Ascending aorta (tissue), 2 donors: ENCODE measurements at regions of chr2 and their contacts with region 1.

Region 1: GRCh38 chr2:233251306-233252116 is at the start of gene ATG16L1:
- DNase-seq: peak; percentile 78 to 97
- H3K4me3 ChIP-seq: peak within 1 kb of the TSS; percentile 68 to 79
- H3K27ac ChIP-seq: peak within 1 kb of the TSS; percentile 71 to 88
- H3K4me1 ChIP-seq: peaks cover 3 to 14% of the 10 kb centered on the region in 2 donors
- H3K27me3 ChIP-seq: no peaks in the 10 kb centered on the region
- CTCF ChIP-seq: peak; percentile 93 to 96 (median 94)
- total RNA-seq, gene ATG16L1: 28.1 TPM

Region 2: GRCh38 chr2:232550354-232551249 is 700.9 kb before region 1 on chr2 and contains the starts of genes EIF4E2 and TIGD1:
- intact Hi-C with region 1: loop called (anchors 2 kb)
- DNase-seq: peak; percentile 67 to 97
- H3K4me3 ChIP-seq: peak within 1 kb of the TSS; percentile 84 to 100
- H3K27ac ChIP-seq: peak within 1 kb of the TSS; percentile 97 to 100
- H3K4me1 ChIP-seq: peaks cover 4 to 5% of the 10 kb centered on the region in 2 donors
- H3K27me3 ChIP-seq: no peaks in the 10 kb centered on the region
- CTCF ChIP-seq: peak; percentile 31 to 45 (median 34)
- total RNA-seq, gene EIF4E2: 16.7 TPM
- total RNA-seq, gene TIGD1: 0.53 TPM

Region 3: GRCh38 chr2:232697100-232697865 is 554.2 kb before region 1 on chr2 and contains the start of gene GIGYF2:
- intact Hi-C with region 1: loop called (anchors 1 kb)
- DNase-seq: peak; percentile 92 to 98
- H3K4me3 ChIP-seq: peak within 1 kb of the TSS; percentile 83 to 98
- H3K27ac ChIP-seq: peak within 1 kb of the TSS; percentile 93 to 96
- H3K4me1 ChIP-seq: peaks cover 7 to 22% of the 10 kb centered on the region in 2 donors
- H3K27me3 ChIP-seq: no peaks in the 10 kb centered on the region
- CTCF ChIP-seq: no peak
- total RNA-seq, gene GIGYF2: 27.5 TPM

Region 4: DNA sequence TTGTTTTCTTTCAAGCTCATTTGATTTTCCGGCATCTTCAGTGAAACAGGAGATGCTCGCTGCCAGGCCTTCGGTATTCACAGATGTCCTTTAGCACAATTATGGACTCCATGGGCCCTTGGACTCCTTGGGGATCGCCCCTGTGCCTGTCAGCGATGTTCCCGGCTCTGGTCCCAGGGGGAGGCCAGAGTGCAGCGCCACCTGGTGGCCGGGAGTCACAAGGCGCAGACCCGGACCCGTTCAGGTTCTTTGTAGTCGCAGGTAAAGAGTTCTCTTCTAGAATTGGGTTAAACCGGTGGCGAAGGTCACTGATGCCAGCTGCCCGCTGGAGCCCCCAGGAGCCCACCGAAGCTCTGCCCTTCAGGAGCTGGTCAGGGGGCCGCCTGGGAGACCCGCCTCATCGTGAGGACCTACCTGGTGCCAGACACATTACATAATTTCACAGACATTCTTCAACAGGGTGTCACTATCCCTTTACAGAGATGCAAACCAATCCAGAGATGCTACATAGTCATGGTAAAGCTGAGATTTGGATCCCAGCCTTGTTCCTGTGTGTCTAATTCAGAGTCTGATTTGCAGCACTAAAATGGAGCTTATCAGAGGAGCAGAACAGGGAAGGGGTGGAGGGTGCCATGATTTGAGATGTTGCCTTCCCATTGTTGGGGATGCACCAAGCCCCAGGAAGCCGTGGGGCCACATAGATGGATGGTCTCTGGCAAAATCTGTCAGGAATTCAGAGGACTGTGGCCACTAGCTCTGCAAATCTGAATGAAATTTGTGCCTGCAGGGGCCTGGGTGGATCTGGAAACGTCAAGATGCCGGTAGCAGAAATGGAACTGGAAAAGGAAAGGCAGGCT is 197.4 kb before region 1 on chr2:
- intact Hi-C with region 1: loop called (anchors 5 kb)
- DNase-seq: peak in 1 of 2 donors; percentile 74
- H3K4me3 ChIP-seq: no peak overlapping the region
- H3K27ac ChIP-seq: no peak overlapping the region
- H3K4me1 ChIP-seq: peaks cover 0 to 3% of the 10 kb centered on the region in 2 donors
- H3K27me3 ChIP-seq: no peaks in the 10 kb centered on the region
- CTCF ChIP-seq: peak; percentile 76 to 91 (median 86)

Region 5: DNA sequence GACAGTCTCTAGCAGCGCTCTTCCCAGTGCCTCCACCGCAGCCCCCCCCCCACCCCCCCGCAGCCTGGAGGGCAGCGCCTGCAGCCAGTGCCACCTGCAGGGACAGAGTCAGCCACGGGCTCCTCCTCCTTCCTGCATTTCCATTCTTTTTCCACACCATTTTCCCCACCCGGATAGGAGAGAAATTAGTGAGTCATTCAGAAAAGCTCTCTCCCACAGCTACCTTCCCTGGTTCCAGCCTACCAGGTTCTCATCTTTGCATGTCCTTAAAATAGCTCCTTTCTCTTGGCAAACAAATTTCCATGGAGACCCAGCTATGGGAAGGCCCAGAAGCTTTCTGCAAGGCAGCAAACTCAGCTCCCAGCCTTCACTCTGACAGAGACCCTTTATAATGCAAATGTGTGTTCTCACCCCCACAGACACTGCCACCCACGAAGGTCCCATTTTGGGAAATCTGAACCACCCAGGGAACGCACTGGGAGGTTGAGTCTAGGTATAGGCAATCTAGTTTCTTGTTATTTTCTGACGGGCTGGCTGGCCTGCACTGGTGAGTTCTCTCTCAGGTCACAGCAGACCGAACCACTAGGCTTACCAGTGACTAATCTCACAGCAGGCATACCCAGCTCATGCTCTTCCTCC is 41.9 kb before region 1 on chr2:
- intact Hi-C with region 1: no loop called
- DNase-seq: no peak
- H3K4me3 ChIP-seq: no peak overlapping the region
- H3K27ac ChIP-seq: peak overlapping the region in 1 of 2 donors; percentile 9
- H3K4me1 ChIP-seq: peaks cover 8 to 12% of the 10 kb centered on the region in 2 donors
- H3K27me3 ChIP-seq: no peaks in the 10 kb centered on the region
- CTCF ChIP-seq: no peak

Region 6: DNA sequence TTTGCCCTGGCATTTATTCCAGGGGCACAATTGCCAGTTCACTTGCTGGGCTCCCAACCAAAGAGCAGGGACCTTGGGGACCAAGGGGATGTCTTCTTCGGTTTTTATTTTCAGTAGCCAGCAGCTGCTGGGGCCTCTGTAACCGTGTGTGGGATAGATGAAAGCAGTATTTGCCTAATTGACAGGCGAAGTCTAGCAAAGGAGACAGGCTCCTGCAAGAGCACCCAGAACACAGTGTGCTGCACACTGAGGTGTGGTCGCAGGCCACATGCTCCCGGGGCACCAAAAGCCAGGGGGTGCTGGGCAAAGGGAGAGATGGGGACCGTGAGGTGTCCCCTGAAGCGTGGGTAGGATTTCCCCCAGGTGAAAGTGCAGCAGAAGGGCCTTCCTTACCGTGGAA is 61.4 kb after region 1 on chr2:
- intact Hi-C with region 1: no loop called
- DNase-seq: no peak
- H3K4me3 ChIP-seq: no peak overlapping the region
- H3K27ac ChIP-seq: no peak overlapping the region
- H3K4me1 ChIP-seq: no peaks in the 10 kb centered on the region
- H3K27me3 ChIP-seq: no peaks in the 10 kb centered on the region
- CTCF ChIP-seq: no peak

Region 7: DNA sequence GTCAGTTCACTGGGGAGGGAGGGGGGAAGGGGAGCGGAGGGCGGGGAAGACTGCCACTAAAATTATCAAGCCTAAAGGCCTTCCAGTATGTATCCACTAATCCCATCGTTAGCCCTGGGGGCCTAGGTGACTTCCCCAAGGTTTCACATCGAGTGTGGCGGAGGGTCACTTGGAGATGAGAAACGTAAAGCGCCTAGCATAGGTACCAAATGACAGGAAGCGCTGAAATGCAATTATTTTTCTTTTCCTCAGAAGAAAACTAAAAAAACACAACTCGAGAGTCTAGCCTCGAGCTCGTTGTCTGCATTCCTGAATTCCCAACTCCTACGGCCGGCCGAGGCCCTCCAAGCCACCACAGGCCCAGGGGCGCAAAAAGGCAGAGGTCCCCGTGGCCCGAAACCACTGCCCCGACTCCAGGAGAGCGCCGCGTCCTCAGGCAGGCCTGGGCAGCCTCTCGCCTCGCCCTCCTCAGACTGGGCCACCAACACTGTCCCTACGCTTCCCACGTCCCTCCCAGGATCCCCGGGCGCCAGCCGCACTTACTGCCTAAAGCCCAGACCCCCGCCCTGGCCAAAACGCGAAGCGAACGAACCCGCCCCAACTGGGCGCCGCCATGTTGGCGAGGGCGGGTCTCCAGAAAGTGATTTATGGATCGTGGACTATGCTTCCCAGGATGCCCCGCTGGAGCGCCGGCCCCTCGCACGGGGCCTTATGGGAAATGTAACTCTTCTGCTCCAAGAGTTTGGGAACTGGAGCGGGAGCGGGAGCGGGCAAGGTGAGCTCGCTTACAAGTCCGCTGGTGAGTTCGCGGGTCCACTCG is 314.8 kb after region 1 on chr2 and contains the start of gene USP40:
- intact Hi-C with region 1: loop called (anchors 2 kb)
- DNase-seq: peak; percentile 54 to 93
- H3K4me3 ChIP-seq: peak within 1 kb of the TSS; percentile 84 to 95
- H3K27ac ChIP-seq: peak within 1 kb of the TSS; percentile 91 to 92
- H3K4me1 ChIP-seq: peaks cover 0 to 5% of the 10 kb centered on the region in 2 donors
- H3K27me3 ChIP-seq: no peaks in the 10 kb centered on the region
- CTCF ChIP-seq: no peak
- total RNA-seq, gene USP40: 42.7 TPM